Endothelial cell of umbilical vein (primary cell): ENCODE measurements at regions of chr5 and their contacts with region 1.

Region 1: DNA sequence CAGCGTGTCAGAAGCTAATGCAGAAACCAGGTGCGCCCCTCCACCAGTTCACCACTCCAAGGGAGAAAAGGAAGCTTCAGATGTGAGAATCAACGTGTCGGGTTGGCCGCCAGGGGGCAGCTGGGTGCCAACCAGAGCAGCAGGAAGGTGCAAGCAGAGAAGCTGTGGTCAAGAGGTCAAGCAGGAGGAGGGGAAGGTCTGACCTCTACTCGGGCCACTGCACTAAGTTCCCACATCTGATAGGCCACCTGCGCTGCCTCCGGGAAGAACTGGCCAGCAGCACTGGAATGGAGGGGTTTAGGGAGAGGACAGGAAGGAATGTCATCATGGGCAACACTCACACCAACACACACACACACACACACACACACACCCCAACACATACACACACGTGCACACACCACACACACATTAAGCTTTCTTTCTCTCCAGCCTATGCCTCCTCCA is 31.4 kb downstream of the ANXA6 start:
- DNase-seq: peak; percentile 57
- H3K4me3 ChIP-seq: no peak overlapping the region
- H3K27ac ChIP-seq: no peak overlapping the region
- H3K4me1 ChIP-seq: no peaks in the 10 kb centered on the region
- H3K27me3 ChIP-seq: no peaks in the 10 kb centered on the region
- CTCF ChIP-seq: peak; percentile 69 to 86
- POLR2A ChIP-seq: no peak

Region 2: GRCh38 chr5:151080623-151081430 is 45.4 kb before region 1 on chr5 and contains the start of gene TNIP1:
- CTCF ChIA-PET with region 1: interaction called, 11 read pairs
- POLR2A ChIA-PET with region 1: no interaction called
- dilution Hi-C with region 1: no loop called
- intact Hi-C with region 1: no loop called
- DNase-seq: peak; percentile 92
- H3K4me3 ChIP-seq: peak within 1 kb of the TSS; percentile 51 to 77 (median 62)
- H3K27ac ChIP-seq: peak within 1 kb of the TSS; percentile 94
- H3K4me1 ChIP-seq: peaks cover 37% of the 10 kb centered on the region
- H3K27me3 ChIP-seq: no peaks in the 10 kb centered on the region
- CTCF ChIP-seq: no peak
- POLR2A ChIP-seq: peak; percentile 57
- total RNA-seq, gene TNIP1: 87.0 and 96.8 TPM in 2 replicates

Region 3: GRCh38 chr5:151150471-151151262 is 24.4 kb after region 1 on chr5:
- CTCF ChIA-PET with region 1: interaction called, 24 read pairs
- POLR2A ChIA-PET with region 1: no interaction called
- dilution Hi-C with region 1: no loop called
- intact Hi-C with region 1: no loop called
- DNase-seq: peak; percentile 38
- H3K4me3 ChIP-seq: no peak overlapping the region
- H3K27ac ChIP-seq: no peak overlapping the region
- H3K4me1 ChIP-seq: peaks cover 27% of the 10 kb centered on the region
- H3K27me3 ChIP-seq: no peaks in the 10 kb centered on the region
- CTCF ChIP-seq: no peak
- POLR2A ChIP-seq: no peak

Region 4: GRCh38 chr5:151164686-151165392 is 38.6 kb after region 1 on chr5:
- CTCF ChIA-PET with region 1: interaction called, 409 read pairs
- POLR2A ChIA-PET with region 1: interaction called, 11 read pairs
- dilution Hi-C with region 1: no loop called
- intact Hi-C with region 1: loop called (anchors 1 kb)
- DNase-seq: peak; percentile 91
- H3K4me3 ChIP-seq: no peak overlapping the region
- H3K27ac ChIP-seq: no peak overlapping the region
- H3K4me1 ChIP-seq: peaks cover 8% of the 10 kb centered on the region
- H3K27me3 ChIP-seq: peaks cover 0 to 1% of the 10 kb centered on the region in 2 experiments
- CTCF ChIP-seq: peak; percentile 79 to 90
- POLR2A ChIP-seq: no peak

Region 5: DNA sequence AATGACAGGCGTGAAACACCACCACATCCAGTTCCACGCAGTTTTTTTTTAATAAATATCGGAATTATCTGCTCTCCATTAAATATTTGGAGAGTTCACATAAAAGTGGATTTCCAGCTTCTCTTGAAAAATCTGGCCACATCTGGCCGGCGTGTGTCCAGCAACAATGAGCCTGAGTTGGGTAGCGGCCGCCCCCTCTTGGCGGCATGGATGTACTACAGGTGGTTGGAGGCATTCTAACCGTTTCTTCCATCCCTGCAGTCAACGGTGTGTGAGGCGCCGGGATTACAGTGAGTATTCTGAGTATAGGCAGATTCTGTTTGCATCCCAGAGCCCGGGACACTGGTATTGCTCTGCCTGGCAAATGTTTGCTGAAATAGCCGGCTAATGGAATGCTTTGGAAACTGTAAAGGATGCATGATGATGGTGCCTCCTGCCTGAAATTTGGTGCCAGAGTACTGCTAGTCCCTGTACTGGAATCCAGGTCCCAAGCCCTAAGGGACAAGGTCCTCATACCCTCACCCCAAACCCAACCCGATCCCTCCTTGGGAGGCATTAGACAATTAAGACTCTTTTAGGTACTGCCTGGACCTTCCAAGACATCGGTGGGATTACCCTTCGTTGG is 113.1 kb after region 1 on chr5:
- CTCF ChIA-PET with region 1: interaction called, 187 read pairs
- POLR2A ChIA-PET with region 1: no interaction called
- dilution Hi-C with region 1: no loop called
- intact Hi-C with region 1: loop called (anchors 1 kb)
- DNase-seq: peak; percentile 67
- H3K4me3 ChIP-seq: no peak overlapping the region
- H3K27ac ChIP-seq: no peak overlapping the region
- H3K4me1 ChIP-seq: no peaks in the 10 kb centered on the region
- H3K27me3 ChIP-seq: no peaks in the 10 kb centered on the region
- CTCF ChIP-seq: peak; percentile 73 to 88
- POLR2A ChIP-seq: no peak

Region 6: GRCh38 chr5:151288180-151288579 is 162.0 kb after region 1 on chr5:
- CTCF ChIA-PET with region 1: no interaction called
- POLR2A ChIA-PET with region 1: no interaction called
- dilution Hi-C with region 1: no loop called
- intact Hi-C with region 1: no loop called
- DNase-seq: no peak
- H3K4me3 ChIP-seq: no peak overlapping the region
- H3K27ac ChIP-seq: no peak overlapping the region
- H3K4me1 ChIP-seq: no peaks in the 10 kb centered on the region
- H3K27me3 ChIP-seq: no peaks in the 10 kb centered on the region
- CTCF ChIP-seq: no peak
- POLR2A ChIP-seq: no peak

Region 7: GRCh38 chr5:151315998-151316597 is 189.9 kb after region 1 on chr5:
- CTCF ChIA-PET with region 1: interaction called, 14 read pairs
- POLR2A ChIA-PET with region 1: no interaction called
- dilution Hi-C with region 1: no loop called
- intact Hi-C with region 1: loop called (anchors 5 kb)
- DNase-seq: peak; percentile 73
- H3K4me3 ChIP-seq: no peak overlapping the region
- H3K27ac ChIP-seq: no peak overlapping the region
- H3K4me1 ChIP-seq: no peaks in the 10 kb centered on the region
- H3K27me3 ChIP-seq: no peaks in the 10 kb centered on the region
- CTCF ChIP-seq: peak; percentile 88 to 90
- POLR2A ChIP-seq: no peak

Region 8: DNA sequence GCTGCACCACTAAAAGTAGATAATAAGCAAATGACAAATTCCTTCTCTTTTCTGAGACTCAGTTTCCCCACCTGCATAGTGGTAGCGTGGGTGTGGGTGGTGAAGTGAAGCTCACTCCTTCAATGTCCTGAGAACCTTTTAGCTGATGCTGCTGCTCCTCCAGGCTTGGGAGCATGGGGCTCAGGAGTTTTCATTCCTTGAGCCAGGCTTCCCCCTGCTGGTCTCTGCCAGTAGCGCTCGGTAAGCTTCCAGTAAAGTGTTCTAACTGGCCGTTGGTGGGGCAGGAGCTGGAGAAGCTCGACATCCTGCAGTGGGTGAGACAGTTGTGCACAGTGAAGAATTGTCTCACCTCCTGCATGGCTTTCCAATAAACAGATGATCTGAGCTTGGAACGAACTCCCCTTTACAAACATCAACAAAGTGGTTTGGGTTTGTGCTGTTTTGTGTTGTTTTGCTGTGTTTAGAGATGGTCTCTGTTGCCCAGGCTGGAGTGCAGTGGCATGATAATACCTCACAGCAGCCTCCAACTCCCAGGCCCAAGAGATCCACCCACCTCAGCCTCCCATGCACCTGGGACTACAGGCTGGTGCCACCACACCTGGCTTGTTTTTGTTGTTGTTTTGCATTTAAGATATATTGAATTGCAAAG is 525.9 kb after region 1 on chr5:
- CTCF ChIA-PET with region 1: interaction called, 23 read pairs
- POLR2A ChIA-PET with region 1: no interaction called
- dilution Hi-C with region 1: no loop called
- intact Hi-C with region 1: no loop called
- DNase-seq: peak; percentile 80
- H3K4me3 ChIP-seq: no peak overlapping the region
- H3K27ac ChIP-seq: no peak overlapping the region
- H3K4me1 ChIP-seq: no peaks in the 10 kb centered on the region
- H3K27me3 ChIP-seq: peaks cover 0 to 4% of the 10 kb centered on the region in 2 experiments
- CTCF ChIP-seq: peak; percentile 88 to 92
- POLR2A ChIP-seq: no peak